ENCODE measurements at regions of chr3 and their contacts with region 1.

Region 1: GRCh38 chr3:52721002-52721729 is 15.3 kb downstream of the SPCS1 start:
- DNase-seq: no peak
- H3K4me3 ChIP-seq: no peak overlapping the region
- H3K27me3 ChIP-seq: no peaks in the 10 kb centered on the region
- CTCF ChIP-seq: no peak

Region 2: DNA sequence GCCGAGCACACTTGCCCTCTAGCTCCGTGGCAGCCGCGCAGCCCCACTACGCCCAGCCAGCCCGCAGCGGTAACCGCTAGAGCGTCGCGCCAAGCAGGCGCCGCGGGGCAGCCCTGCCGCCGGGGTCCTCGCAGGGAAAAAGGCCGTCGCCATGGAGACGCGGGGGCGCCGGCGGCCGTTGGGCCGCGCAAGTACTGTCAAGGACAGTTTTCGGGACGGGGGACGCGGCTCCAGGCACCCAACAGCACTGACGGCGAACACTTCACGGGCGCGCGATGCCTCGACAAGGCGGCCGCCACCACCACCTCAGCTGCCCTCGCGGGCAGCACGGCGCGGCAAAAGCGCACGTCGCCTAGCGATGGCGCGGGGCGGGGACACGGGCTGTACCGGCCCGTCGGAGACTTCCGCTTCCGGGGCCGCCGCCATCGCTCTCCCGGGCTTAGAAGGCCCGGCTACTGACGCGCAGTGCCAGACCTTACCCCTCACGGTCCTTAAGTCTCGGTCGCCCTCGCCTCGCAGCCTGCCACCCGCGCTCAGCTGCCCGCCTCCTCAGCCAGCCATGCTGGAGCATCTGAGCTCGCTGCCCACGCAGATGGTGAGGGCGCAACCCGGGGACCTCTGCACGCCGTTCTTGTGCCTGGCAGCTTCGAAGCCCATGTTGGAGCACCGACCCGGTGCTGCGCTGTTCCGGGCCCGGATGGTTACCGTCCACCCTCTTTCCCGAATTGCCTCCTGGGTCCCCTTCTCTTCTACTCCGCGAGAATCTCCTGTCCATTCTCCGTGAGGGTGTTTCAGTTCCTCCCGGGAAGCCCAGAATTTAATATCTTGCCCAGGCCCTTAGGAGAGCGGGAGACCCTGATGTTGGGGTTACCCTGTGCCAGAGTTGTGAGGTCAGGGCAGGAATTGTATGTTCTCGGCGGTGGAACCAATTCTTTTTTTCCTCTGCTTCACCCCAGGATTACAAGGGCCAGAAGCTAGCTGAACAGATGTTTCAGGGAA is 15.2 kb before region 1 on chr3 and contains the starts of genes GLT8D1 and SPCS1:
- CTCF ChIA-PET with region 1: no interaction called
- POLR2A ChIA-PET with region 1: interaction called, 14 read pairs
- DNase-seq: no peak
- H3K4me3 ChIP-seq: peak within 1 kb of the TSS; percentile 65
- H3K27me3 ChIP-seq: no peaks in the 10 kb centered on the region
- CTCF ChIP-seq: no peak
- polyA plus RNA-seq, gene GLT8D1: 75.9 and 98.3 TPM in 2 replicates
- polyA plus RNA-seq, gene SPCS1: 79.6 and 137 TPM in 2 replicates

Region 3: GRCh38 chr3:52959773-52960172 is 238.6 kb after region 1 on chr3:
- CTCF ChIA-PET with region 1: no interaction called
- POLR2A ChIA-PET with region 1: no interaction called
- DNase-seq: no peak
- H3K4me3 ChIP-seq: no peak overlapping the region
- H3K27me3 ChIP-seq: no peaks in the 10 kb centered on the region
- CTCF ChIP-seq: no peak